Activated B cell treated with CpG ODN at 0.5 μM for 24 hours (primary cell): ENCODE measurements at regions of chr10 and their contacts with region 1.

Region 1: GRCh38 chr10:31759799-31760626 is 168.6 kb downstream of the ARHGAP12 start:
- DNase-seq: peak; percentile 85
- ATAC-seq: peak; percentile 94
- H3K4me3 Mint-ChIP-seq: peak overlapping the region; percentile 85
- H3K27ac Mint-ChIP-seq: peak overlapping the region; percentile 91
- H3K4me1 Mint-ChIP-seq: peaks cover 13% of the 10 kb centered on the region
- H3K27me3 Mint-ChIP-seq: no peaks in the 10 kb centered on the region
- CTCF ChIP-seq: no peak

Region 2: GRCh38 chr10:30348378-30348776 is 1411.6 kb before region 1 on chr10:
- CTCF ChIA-PET with region 1: no interaction called
- POLR2A ChIA-PET with region 1: no interaction called
- intact Hi-C with region 1: loop called (anchors 2 kb)
- DNase-seq: no peak
- ATAC-seq: no peak
- H3K4me3 Mint-ChIP-seq: peak overlapping the region; percentile 99
- H3K27ac Mint-ChIP-seq: peak overlapping the region; percentile 95
- H3K4me1 Mint-ChIP-seq: peaks cover 46% of the 10 kb centered on the region
- H3K27me3 Mint-ChIP-seq: no peaks in the 10 kb centered on the region
- CTCF ChIP-seq: no peak

Region 3: DNA sequence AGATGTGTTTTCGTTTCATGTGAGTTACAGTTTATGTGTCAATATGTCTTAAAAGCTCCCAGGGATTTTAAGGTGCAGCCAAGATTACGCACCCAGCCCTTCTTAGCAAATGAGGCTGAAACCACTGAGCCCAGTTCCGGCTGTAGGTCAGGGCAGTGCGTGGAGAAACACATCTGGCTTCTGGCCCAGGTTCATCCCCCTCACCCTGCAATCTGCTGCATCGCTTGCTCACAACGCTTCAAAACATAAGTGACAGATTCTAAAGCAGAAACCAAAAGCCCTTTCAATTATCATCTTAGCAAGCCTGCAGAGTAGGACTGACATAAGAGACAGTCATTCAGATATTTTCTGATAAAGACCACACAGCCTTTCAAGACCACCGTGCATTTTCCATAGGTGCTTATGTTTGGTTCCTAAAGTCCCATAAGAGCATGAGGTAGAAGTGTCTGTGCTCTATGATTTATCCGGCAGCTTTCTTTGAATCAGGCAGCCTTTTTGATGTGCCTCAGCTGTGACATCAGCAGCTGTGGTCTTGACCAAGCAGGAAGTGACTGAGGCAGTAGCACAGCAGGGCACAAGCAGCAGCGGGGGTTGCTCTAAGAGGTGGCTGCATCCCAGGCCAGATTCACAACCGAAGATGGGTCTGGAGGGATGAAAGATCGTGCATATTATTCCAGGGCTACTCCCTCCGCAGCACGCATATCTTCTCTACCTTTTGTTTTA is 1058.4 kb before region 1 on chr10:
- CTCF ChIA-PET with region 1: no interaction called
- POLR2A ChIA-PET with region 1: no interaction called
- intact Hi-C with region 1: loop called (anchors 1 kb)
- DNase-seq: no peak
- ATAC-seq: peak; percentile 61
- H3K4me3 Mint-ChIP-seq: peak overlapping the region; percentile 74
- H3K27ac Mint-ChIP-seq: peak overlapping the region; percentile 86
- H3K4me1 Mint-ChIP-seq: peaks cover 64% of the 10 kb centered on the region
- H3K27me3 Mint-ChIP-seq: no peaks in the 10 kb centered on the region
- CTCF ChIP-seq: no peak

Region 4: GRCh38 chr10:31515819-31516402 is 244.1 kb before region 1 on chr10:
- CTCF ChIA-PET with region 1: no interaction called
- POLR2A ChIA-PET with region 1: no interaction called
- intact Hi-C with region 1: loop called (anchors 10 kb)
- DNase-seq: no peak
- ATAC-seq: no peak
- H3K4me3 Mint-ChIP-seq: no peak overlapping the region
- H3K27ac Mint-ChIP-seq: no peak overlapping the region
- H3K4me1 Mint-ChIP-seq: no peaks in the 10 kb centered on the region
- H3K27me3 Mint-ChIP-seq: no peaks in the 10 kb centered on the region
- CTCF ChIP-seq: no peak

Region 5: GRCh38 chr10:31702005-31702404 is 58.0 kb before region 1 on chr10:
- CTCF ChIA-PET with region 1: no interaction called
- POLR2A ChIA-PET with region 1: interaction called, 3 read pairs
- intact Hi-C with region 1: loop called (anchors 1 kb)
- DNase-seq: no peak
- ATAC-seq: peak; percentile 72
- H3K4me3 Mint-ChIP-seq: peak overlapping the region; percentile 42
- H3K27ac Mint-ChIP-seq: peak overlapping the region; percentile 72
- H3K4me1 Mint-ChIP-seq: peaks cover 42% of the 10 kb centered on the region
- H3K27me3 Mint-ChIP-seq: no peaks in the 10 kb centered on the region
- CTCF ChIP-seq: no peak

Region 6: DNA sequence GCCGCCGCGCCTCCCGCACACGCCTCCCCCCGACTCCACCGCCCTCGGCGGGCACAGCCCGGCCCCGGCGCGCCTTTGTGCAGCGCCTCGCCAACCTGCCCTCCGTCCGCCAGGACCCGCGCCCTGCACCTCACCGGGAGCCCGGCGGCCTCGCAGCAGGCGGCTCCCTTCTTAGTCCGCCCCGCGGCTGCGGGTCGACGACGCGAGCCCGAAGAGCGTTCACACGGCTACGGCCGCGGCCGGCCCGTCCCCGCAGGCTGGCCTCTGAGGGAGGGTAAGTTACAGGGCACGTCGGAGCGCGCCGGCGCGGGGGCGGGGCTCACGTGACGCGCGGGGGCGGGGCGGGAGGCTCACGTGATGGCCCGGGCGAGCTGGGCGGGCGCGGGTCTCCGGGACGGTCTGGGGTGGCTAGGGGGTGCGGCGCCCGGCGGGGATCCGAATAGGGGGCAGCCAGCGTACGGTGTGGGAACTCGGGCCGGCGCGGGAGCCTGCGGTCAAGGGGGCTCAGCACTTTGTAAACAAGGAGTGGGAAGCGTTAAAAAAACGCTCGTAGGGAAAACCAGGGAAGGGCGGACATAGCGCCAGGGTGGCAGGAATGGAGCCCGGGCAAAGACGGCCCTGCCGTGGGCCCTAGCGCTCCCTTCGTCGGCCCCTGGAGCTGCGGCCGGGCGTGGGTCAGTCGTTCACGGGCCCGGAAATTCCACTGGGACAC is 168.7 kb after region 1 on chr10 and contains the start of gene ARHGAP12:
- CTCF ChIA-PET with region 1: no interaction called
- POLR2A ChIA-PET with region 1: no interaction called
- intact Hi-C with region 1: loop called (anchors 1 kb)
- DNase-seq: peak; percentile 97
- ATAC-seq: peak; percentile 74
- H3K4me3 Mint-ChIP-seq: peak within 1 kb of the TSS; percentile 91
- H3K27ac Mint-ChIP-seq: peak within 1 kb of the TSS; percentile 88
- H3K4me1 Mint-ChIP-seq: peaks cover 44% of the 10 kb centered on the region
- H3K27me3 Mint-ChIP-seq: no peaks in the 10 kb centered on the region
- CTCF ChIP-seq: no peak
- total RNA-seq, gene ARHGAP12: 23.2 and 27.3 TPM in 2 replicates

Region 7: DNA sequence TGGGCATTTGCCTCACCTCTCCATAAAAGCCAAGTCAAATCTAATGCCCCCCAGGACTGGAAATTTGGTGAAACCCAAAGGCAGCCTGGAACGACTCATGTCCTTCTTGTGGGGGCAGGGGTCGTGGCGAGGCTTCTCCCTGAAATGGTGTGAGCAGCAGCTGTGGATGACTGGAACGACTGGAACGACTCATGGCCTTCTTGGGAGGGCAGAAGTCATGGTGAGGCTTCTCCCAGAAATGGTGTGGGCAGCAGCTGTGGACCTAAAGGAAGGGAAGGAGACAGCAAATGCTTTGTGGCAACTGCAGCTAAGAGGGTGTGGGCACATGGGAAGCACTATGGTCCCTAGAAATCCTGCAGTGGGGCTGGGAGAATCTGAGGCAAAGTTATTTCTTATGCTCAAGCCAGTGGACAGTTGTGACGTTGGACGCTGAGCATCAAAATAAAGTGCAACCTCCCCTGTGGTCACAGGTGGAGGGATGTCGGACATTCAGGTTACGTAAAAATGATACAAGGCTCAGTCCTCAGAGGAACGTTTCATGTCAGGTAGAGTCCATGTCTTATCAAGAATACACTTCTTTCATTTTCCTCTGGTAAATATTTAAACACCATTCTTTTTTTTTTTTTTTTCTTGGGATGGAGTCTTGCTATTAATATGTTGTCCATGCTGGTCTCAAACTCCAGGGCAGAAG is 403.2 kb after region 1 on chr10:
- CTCF ChIA-PET with region 1: no interaction called
- POLR2A ChIA-PET with region 1: no interaction called
- intact Hi-C with region 1: no loop called
- DNase-seq: no peak
- ATAC-seq: no peak
- H3K4me3 Mint-ChIP-seq: no peak overlapping the region
- H3K27ac Mint-ChIP-seq: no peak overlapping the region
- H3K4me1 Mint-ChIP-seq: no peaks in the 10 kb centered on the region
- H3K27me3 Mint-ChIP-seq: peaks cover 6% of the 10 kb centered on the region
- CTCF ChIP-seq: no peak

Region 8: GRCh38 chr10:32378363-32379317 is 618.6 kb after region 1 on chr10:
- CTCF ChIA-PET with region 1: no interaction called
- POLR2A ChIA-PET with region 1: no interaction called
- intact Hi-C with region 1: loop called (anchors 1 kb)
- DNase-seq: peak; percentile 73
- ATAC-seq: peak; percentile 94
- H3K4me3 Mint-ChIP-seq: no peak overlapping the region
- H3K27ac Mint-ChIP-seq: no peak overlapping the region
- H3K4me1 Mint-ChIP-seq: peaks cover 21% of the 10 kb centered on the region
- H3K27me3 Mint-ChIP-seq: no peaks in the 10 kb centered on the region
- CTCF ChIP-seq: no peak